ENCODE measurements at regions of chr5 and their contacts with region 1.

Region 1: GRCh38 chr5:72366324-72366976 is 46.3 kb downstream of the PTCD2 start:
- H3K4me3 ChIP-seq: no peak overlapping the region
- H3K27ac ChIP-seq: no peak overlapping the region
- H3K4me1 ChIP-seq: no peaks in the 10 kb centered on the region
- CTCF ChIP-seq: peak; percentile 42; the same call in 1 of the 2 replicates

Region 2: GRCh38 chr5:72353046-72353445 is 13.4 kb before region 1 on chr5:
- CTCF ChIA-PET with region 1: interaction called, 15 read pairs
- POLR2A ChIA-PET with region 1: no interaction called
- H3K4me3 ChIP-seq: no peak overlapping the region
- H3K27ac ChIP-seq: no peak overlapping the region
- H3K4me1 ChIP-seq: peaks cover 9% of the 10 kb centered on the region
- CTCF ChIP-seq: no peak

Region 3: DNA sequence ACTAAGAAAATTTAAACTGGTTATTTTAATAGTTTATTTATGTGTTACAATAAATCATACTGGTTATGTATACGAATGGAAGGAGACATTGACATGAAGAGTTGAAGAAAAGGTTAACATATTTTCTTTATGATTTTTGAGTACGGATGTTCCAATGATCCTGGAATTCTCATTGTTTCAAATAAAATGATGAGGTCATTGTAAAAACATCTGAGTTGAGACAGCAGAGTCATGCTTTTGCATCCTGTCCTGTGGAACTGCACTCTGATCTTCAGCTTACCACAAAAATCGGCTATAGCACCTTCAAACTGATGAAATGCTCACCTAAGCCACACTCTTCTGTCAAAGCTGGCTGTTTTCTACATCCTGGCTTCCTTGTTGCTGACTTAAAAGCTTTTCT is 21.5 kb after region 1 on chr5:
- CTCF ChIA-PET with region 1: interaction called, 10 read pairs
- POLR2A ChIA-PET with region 1: no interaction called
- H3K4me3 ChIP-seq: no peak overlapping the region
- H3K27ac ChIP-seq: no peak overlapping the region
- H3K4me1 ChIP-seq: no peaks in the 10 kb centered on the region
- CTCF ChIP-seq: no peak

Region 4: DNA sequence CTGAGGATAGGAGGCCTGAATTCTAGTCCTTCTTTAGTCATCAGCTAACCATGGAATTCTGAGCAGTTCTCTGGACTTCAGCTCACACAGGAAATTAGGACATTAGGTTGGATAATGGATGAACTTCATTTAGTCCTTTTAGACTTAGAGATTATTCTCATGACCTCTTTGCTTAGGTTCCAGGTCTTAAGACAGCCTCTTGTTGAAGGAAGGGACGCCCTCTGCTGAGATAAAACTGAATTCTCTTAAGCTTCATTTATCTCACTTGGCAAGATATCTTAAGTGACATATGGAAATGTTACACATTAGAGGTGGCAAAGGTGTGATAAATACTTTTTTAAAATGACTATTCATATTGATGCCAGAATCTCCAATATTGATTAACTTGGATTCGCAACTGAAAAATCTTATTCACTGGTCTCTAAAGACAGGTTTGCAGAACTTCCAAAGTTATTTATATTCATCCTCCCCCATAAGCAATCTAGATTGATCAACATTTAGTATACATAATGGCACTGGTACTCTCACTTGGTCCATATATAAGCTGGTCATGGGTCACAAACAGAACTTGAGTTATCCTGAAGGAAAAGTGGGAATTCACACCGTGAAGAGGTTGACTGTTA is 157.6 kb after region 1 on chr5:
- CTCF ChIA-PET with region 1: interaction called, 50 read pairs
- POLR2A ChIA-PET with region 1: interaction called, 3 read pairs
- H3K4me3 ChIP-seq: no peak overlapping the region
- H3K27ac ChIP-seq: no peak overlapping the region
- H3K4me1 ChIP-seq: no peaks in the 10 kb centered on the region
- CTCF ChIP-seq: no peak

Region 5: GRCh38 chr5:72816311-72817145 is 450.1 kb after region 1 on chr5 and contains the start of gene TNPO1:
- CTCF ChIA-PET with region 1: interaction called, 17 read pairs
- POLR2A ChIA-PET with region 1: no interaction called
- H3K4me3 ChIP-seq: peak within 1 kb of the TSS; percentile 83
- H3K27ac ChIP-seq: peak within 1 kb of the TSS; percentile 99
- H3K4me1 ChIP-seq: peaks cover 9% of the 10 kb centered on the region
- CTCF ChIP-seq: no peak; the same call in 1 of the 2 replicates